ENCODE measurements at regions of chr6 and their contacts with region 1.

Region 1: DNA sequence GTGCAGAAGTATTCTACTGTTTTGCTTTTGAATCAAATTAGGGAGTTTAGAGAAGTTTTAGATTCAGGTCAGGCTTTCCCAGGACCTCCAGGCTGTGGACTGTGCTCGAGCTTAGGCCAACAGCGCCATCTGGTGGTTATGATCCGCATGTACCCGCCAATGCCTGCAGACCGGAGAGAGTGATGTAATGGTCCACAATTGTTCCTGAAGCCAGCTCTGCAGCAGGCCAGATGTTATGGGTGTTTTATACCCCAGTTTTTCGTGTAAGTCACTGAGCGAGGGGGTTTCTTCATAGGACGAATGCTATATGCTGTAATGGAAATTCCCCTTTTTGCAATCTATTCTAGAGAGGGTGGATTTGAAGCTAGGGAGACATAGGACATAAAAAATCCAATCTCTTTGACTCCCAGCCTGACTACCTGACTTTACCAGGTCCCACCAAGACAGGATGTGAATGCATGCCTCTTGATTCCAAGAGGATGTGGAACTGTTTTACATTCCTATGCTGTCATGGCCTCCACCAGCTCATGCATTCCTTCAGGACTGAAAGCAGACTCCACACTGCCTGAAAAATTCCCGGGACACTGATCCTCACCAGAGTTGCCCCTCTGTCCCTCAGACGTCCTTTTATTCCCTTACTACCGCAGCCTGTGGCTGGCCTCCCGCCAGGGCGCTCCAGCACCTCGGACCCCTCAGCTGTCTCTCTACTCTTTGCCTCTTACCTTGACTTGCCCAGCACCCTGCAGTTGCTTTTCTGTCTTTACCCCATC is 41.2 kb upstream of the LY86 start:
- DNase-seq: peak; percentile 62 to 76
- ATAC-seq: peak; percentile 93 to 96
- H3K4me3 ChIP-seq: peak overlapping the region; percentile 45 to 67 (median 56)
- H3K27ac ChIP-seq: no peak overlapping the region
- H3K4me1 ChIP-seq: peaks cover 7 to 12% of the 10 kb centered on the region in 2 donors
- H3K27me3 ChIP-seq: peaks cover 9 to 19% (median 15%) of the 10 kb centered on the region in 3 donors
- CTCF ChIP-seq: peak; percentile 86 to 93 (median 89)
- POLR2A ChIP-seq: no peak

Region 2: GRCh38 chr6:5143634-5144311 is 1403.5 kb before region 1 on chr6:
- in situ Hi-C with region 1: loop called in 2 of 4 experiments (anchors 25 kb)
- intact Hi-C with region 1: loop called (anchors 2 kb)
- DNase-seq: peak; percentile 59 to 72
- ATAC-seq: peak; percentile 82 to 90
- H3K4me3 ChIP-seq: no peak overlapping the region
- H3K27ac ChIP-seq: no peak overlapping the region
- H3K4me1 ChIP-seq: peaks cover 4 to 10% of the 10 kb centered on the region in 2 donors
- H3K27me3 ChIP-seq: no peaks in the 10 kb centered on the region
- CTCF ChIP-seq: peak; percentile 81 to 96 (median 87)
- POLR2A ChIP-seq: no peak

Region 3: DNA sequence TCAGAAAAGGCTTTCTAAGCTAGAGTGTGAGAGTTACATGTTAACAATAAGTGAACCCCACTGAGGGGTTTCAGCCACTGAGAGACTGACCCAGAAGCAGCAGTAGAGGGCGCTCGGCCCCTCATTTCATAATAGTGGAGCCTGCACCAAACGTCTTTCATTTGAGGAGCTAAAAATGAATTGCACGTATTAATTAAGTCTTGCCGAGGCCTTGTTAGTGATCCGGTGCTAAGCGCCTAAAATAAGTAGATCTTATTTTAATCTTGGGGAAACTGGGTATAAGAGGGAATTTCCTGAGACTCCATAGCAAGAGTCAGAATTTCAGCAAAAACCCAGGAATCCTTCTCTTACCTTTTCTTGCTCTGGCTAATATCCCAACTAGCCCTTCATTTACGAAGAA is 1076.3 kb before region 1 on chr6:
- in situ Hi-C with region 1: loop called in 1 of 4 experiments (anchors 25 kb)
- intact Hi-C with region 1: no loop called
- DNase-seq: no peak
- ATAC-seq: peak; percentile 70 to 81
- H3K4me3 ChIP-seq: no peak overlapping the region
- H3K27ac ChIP-seq: no peak overlapping the region
- H3K4me1 ChIP-seq: peaks cover 0 to 6% of the 10 kb centered on the region in 2 donors
- H3K27me3 ChIP-seq: no peaks in the 10 kb centered on the region
- CTCF ChIP-seq: peak; percentile 45 to 82 (median 63)
- POLR2A ChIP-seq: no peak

Region 4: GRCh38 chr6:6057424-6058053 is 489.8 kb before region 1 on chr6:
- in situ Hi-C with region 1: loop called (anchors 10 to 25 kb)
- intact Hi-C with region 1: loop called (anchors 5 kb)
- DNase-seq: no peak
- ATAC-seq: no peak
- H3K4me3 ChIP-seq: no peak overlapping the region
- H3K27ac ChIP-seq: no peak overlapping the region
- H3K4me1 ChIP-seq: no peaks in the 10 kb centered on the region
- H3K27me3 ChIP-seq: no peaks in the 10 kb centered on the region
- CTCF ChIP-seq: peak in 3 of 5 experiments; percentile 20 to 43 (median 41)
- POLR2A ChIP-seq: no peak

Region 5: GRCh38 chr6:6614096-6614982 is 67.0 kb after region 1 on chr6:
- in situ Hi-C with region 1: no loop called
- intact Hi-C with region 1: no loop called
- DNase-seq: no peak
- ATAC-seq: no peak
- H3K4me3 ChIP-seq: no peak overlapping the region
- H3K27ac ChIP-seq: no peak overlapping the region
- H3K4me1 ChIP-seq: no peaks in the 10 kb centered on the region
- H3K27me3 ChIP-seq: no peaks in the 10 kb centered on the region
- CTCF ChIP-seq: no peak
- POLR2A ChIP-seq: no peak